Psoas muscle (tissue), 8 donors: ENCODE measurements at regions of chr9 and their contacts with region 1.

Region 1: GRCh38 chr9:7103771-7104170 is 346.0 kb downstream of the KDM4C start:
- DNase-seq: peak; percentile 21 to 52
- ATAC-seq: peak; percentile 97 to 98 (median 98)
- H3K4me3 ChIP-seq: no peak overlapping the region
- H3K27ac ChIP-seq: peak overlapping the region; percentile 63
- H3K4me1 ChIP-seq: peaks cover 15% of the 10 kb centered on the region
- H3K27me3 ChIP-seq: no peaks in the 10 kb centered on the region
- CTCF ChIP-seq: no peak

Region 2: DNA sequence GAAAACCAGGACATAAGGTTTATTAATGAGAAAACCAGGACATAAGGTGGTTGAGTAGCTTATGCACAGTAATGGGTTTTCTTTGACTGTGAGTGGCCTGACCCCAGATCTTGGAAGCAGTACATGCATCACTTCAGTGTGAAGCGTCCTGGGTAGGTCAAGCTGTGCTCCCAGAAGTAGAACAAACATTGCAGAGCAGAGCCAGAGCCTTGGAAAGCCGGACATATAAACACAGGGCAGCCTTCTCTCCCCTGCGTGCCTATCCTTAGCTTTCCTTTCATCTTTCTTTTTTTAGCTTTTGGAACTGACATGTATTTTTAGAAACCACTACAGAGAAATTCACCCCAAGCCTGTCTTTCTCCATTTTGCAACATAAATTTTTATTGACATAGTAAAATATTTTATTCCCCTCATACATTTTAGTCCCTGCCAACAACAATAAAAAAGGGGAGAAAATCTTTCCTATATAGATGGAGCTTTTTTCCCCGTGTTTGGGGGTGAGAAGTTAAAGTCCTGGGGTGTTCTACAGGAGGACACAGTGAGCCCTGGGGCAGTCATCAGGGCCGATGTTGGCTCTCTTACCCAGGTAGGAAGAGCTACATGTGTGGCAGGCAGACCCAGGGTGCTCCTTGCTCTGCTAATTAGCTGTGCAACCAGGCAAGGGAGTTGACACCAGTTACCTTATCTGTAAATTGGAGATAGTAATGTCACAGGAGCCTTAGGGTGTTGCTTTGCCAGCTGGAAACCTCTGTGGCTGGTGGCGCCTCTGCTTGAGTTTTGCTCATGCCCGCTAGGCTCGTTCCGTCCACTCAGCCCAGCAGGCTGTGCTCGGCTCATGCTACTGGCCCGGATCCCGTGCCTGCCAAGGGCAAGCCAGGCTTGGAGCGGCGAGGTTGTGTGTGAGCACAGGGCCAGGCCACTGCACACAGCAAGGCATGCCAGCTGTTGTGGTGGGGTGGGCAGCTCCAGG is 43.6 kb after region 1 on chr9:
- intact Hi-C with region 1: loop called (anchors 2 to 5 kb)
- DNase-seq: peak; percentile 57 to 89
- ATAC-seq: peak; percentile 82 to 91 (median 90)
- H3K4me3 ChIP-seq: peak overlapping the region; percentile 10
- H3K27ac ChIP-seq: peak overlapping the region; percentile 90
- H3K4me1 ChIP-seq: peaks cover 57% of the 10 kb centered on the region
- H3K27me3 ChIP-seq: no peaks in the 10 kb centered on the region
- CTCF ChIP-seq: no peak